PC-3 (cell line): ENCODE measurements at regions of chr13 and their contacts with region 1.

Region 1: DNA sequence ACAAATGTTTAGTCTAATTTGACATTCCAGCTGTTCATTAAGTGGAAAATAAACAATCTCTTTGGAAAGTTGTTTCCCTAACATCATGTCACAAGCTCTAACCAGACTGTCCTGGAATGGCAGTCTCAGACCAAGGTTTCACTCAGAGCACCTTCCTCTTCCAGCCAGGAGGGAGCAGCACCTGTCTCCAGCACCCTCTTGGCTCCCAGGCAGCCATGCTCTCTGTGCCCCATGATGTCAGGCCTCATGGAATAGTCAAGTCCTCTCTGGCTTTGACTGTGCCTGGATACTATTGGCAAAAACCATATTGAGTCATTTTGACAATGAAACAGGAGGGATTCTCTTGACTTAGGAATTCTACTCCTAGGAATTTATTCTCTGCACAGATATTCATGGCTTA is 171.4 kb downstream of the OXGR1 start:
- DNase-seq: peak; percentile 39
- ATAC-seq: peak; percentile 62
- H3K4me3 ChIP-seq: no peak overlapping the region
- H3K27ac ChIP-seq: no peak overlapping the region
- H3K4me1 ChIP-seq: no peaks in the 10 kb centered on the region
- H3K27me3 ChIP-seq: no peaks in the 10 kb centered on the region
- CTCF ChIP-seq: peak; percentile 51

Region 2: DNA sequence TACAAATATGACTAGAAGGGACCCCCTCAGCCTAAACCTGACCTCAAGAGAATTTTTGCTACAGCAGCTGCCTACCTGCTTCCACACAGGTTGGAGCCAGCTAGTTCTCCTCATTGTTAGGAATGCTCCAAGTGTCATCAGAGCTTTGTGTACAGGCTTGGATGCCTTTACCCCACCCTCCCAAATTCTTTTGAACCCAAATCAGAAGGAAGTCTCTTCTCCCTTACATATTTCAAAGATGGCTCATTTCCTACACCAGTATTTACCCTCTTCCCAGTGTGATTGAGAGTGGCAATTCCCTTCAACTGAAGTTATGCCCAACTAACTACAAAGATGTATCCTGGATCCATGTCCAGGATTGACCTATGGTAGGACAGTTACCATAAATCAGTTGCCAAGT is 151.8 kb before region 1 on chr13:
- CTCF ChIA-PET with region 1: no interaction called
- POLR2A ChIA-PET with region 1: no interaction called
- intact Hi-C with region 1: no loop called
- DNase-seq: peak; percentile 72
- ATAC-seq: peak; percentile 47
- H3K4me3 ChIP-seq: no peak overlapping the region
- H3K27ac ChIP-seq: peak overlapping the region; percentile 82
- H3K4me1 ChIP-seq: peaks cover 31% of the 10 kb centered on the region
- H3K27me3 ChIP-seq: no peaks in the 10 kb centered on the region
- CTCF ChIP-seq: no peak

Region 3: DNA sequence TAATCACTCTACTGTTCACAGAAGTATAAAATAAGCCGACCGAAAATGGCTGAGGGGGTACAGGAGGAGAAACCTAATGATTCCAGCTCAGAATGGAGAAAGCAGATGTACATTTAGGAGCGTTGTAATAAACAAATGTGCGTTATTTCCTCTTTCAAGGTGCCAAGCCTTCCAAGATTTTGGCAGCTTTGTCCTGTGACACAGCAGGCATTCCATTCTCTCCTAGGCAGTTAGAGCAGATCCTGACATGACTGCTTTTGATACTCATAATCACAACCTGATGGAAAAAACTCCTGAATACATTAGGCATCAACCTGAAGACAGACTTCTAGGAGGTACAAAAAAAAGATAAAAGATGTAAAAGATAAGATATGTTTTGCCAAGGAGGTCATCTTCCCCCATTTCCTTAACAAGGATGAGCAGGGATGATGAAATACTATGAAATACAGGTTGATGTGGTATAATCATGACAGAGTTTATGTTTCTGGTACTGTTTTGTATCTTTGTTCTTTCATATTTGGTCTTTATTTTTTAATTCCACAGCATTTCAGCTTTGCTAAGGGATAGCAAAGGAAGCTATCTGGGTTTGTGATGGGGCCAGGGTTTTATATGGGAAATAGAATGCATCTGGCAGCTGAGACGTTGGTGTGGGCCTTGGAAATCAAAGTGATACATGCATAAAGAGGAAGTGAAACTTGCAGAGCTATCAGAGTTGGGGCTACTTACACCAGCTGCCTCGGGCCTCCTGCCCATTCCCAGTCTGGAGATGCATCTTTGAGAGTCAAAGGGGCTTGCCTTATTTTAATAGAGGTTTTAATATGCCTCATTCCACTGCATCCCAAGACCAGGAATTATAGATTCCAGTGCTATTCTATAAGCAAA is 51.2 kb before region 1 on chr13:
- CTCF ChIA-PET with region 1: no interaction called
- POLR2A ChIA-PET with region 1: no interaction called
- intact Hi-C with region 1: no loop called
- DNase-seq: no peak
- ATAC-seq: no peak
- H3K4me3 ChIP-seq: no peak overlapping the region
- H3K27ac ChIP-seq: no peak overlapping the region
- H3K4me1 ChIP-seq: no peaks in the 10 kb centered on the region
- H3K27me3 ChIP-seq: no peaks in the 10 kb centered on the region
- CTCF ChIP-seq: no peak

Region 4: DNA sequence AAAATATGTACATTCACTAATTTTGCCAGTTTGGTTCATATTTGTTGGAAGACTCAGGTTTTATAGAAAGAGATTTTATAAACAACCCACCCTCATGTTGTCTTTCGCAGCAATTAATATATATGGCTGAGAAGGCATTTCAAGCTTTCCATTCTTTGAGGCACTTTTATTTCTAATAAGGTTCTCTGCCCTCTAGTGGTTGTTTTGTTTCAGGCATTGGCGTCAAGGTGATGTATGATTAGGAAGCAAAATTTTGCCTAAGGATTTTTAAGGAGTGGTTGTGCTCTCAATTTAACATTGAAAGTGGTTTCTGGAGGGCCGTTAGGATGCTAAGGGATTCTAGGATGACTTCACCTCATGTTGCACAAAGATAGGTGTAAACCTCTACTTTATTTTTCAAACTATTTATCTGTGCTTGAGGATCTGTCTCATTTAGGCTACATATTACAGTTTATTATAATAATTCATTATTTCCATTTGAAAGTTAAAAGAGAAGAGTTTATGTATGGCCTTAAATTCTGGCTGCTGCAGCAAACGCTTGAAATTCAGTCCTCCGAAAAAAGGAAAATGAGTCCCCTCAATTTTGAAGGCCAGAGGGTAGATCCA is 135.5 kb after region 1 on chr13:
- CTCF ChIA-PET with region 1: no interaction called
- POLR2A ChIA-PET with region 1: no interaction called
- intact Hi-C with region 1: loop called (anchors 2 kb)
- DNase-seq: peak; percentile 60
- ATAC-seq: 0 out of 2 replicates have a peak, but pooled peaks have one; percentile 31
- H3K4me3 ChIP-seq: no peak overlapping the region
- H3K27ac ChIP-seq: no peak overlapping the region
- H3K4me1 ChIP-seq: no peaks in the 10 kb centered on the region
- H3K27me3 ChIP-seq: peaks cover 33% of the 10 kb centered on the region
- CTCF ChIP-seq: peak; percentile 69